GM12878 (cell line): ENCODE measurements at regions of chr5 and their contacts with region 1.

Region 1: DNA sequence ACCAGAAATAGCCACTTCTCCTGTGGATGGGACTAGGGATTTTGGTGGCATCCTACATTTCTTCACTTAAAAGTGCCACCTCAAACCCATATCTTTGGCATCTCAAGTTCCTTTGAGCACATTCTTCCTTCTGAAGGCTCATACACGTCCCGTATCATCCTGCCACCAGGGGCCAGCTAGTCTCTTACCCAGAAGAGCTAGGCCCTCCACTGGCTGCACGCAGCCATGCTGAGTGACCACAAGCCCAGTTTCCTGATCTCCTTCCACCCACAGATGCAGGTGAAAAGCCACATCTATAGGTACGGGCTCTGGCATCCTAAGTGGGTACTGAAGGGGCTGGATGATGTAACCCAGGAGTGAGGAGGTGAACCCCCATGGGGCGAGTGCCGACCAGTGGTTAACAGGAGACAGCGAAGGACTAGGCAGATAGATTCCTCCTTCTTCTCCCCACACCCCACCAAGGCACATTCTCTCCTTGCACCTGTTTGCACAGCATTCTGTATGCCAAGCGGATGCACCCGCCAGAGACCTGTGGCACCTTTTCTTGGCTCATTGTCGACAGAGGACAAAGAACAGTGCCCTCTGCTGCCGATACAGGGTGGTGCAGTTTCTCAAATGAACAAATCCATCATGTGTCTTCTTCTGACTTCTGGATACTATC is 14.4 kb upstream of the SCGB3A1 start:
- DNase-seq: peak; percentile 17
- ATAC-seq: peak; percentile 84
- H3K4me3 ChIP-seq: no peak overlapping the region
- H3K27ac ChIP-seq: no peak overlapping the region
- H3K4me1 ChIP-seq: no peaks in the 10 kb centered on the region
- H3K27me3 ChIP-seq: no peaks in the 10 kb centered on the region
- CTCF ChIP-seq: peak; percentile 79 to 86 (median 83)
- EP300 ChIP-seq: no peak
- POLR2A ChIP-seq: no peak
- RAD21 ChIP-seq: peak; percentile 61

Region 2: DNA sequence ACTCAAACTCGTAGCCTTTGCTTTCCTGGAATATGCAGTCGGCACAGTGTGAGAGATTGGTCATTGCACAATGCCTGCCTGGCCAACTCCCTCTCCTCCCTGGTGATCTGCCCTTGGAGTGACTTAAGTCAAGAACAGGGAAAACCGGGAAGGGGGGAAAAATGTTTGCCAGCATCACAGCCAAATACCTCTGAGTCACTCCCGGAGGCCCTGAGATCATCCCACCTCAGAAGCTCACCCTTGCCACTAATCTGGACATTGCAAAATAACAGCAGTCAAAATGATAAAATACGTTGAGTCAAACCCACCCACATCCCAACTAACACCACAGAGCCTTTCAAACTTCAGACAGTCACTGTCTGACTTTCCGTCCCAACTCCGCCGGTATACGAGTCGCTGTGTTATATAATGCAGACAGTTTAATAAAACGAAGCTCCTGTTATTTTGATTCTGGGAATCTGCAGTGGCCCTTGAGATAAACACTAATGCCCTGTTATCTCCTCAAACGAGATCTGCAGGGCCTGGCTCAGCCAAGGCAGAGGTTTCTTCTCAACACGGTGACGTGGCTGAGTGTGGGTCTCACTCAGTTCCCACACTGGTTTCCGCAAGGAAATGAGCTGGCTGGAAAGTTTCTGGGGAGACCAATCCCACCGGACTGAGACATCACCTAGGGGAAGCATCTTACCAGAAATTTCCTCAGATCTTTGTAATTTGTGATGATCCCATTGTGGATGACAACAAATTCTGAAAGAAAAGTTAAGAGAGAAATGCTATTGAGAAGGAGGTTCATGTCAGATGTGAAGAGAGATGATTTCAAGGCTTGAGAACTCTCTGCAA is 274.7 kb before region 1 on chr5:
- CTCF ChIA-PET with region 1: no interaction called
- POLR2A ChIA-PET with region 1: no interaction called
- RAD21 ChIA-PET with region 1: no interaction called
- SMC1A ChIA-PET with region 1: no interaction called
- in situ Hi-C with region 1: no loop called
- intact Hi-C with region 1: no loop called
- DNase-seq: no peak
- ATAC-seq: no peak
- H3K4me3 ChIP-seq: no peak overlapping the region
- H3K27ac ChIP-seq: no peak overlapping the region
- H3K4me1 ChIP-seq: no peaks in the 10 kb centered on the region
- H3K27me3 ChIP-seq: no peaks in the 10 kb centered on the region
- CTCF ChIP-seq: no peak
- EP300 ChIP-seq: no peak
- POLR2A ChIP-seq: no peak
- RAD21 ChIP-seq: no peak

Region 3: GRCh38 chr5:180380856-180381255 is 224.8 kb before region 1 on chr5:
- CTCF ChIA-PET with region 1: no interaction called
- POLR2A ChIA-PET with region 1: no interaction called
- RAD21 ChIA-PET with region 1: no interaction called
- SMC1A ChIA-PET with region 1: no interaction called
- in situ Hi-C with region 1: no loop called
- intact Hi-C with region 1: no loop called
- DNase-seq: no peak
- ATAC-seq: no peak
- H3K4me3 ChIP-seq: no peak overlapping the region
- H3K27ac ChIP-seq: no peak overlapping the region
- H3K4me1 ChIP-seq: no peaks in the 10 kb centered on the region
- H3K27me3 ChIP-seq: peaks cover 0 to 2% of the 10 kb centered on the region in 2 experiments
- CTCF ChIP-seq: no peak
- EP300 ChIP-seq: no peak
- POLR2A ChIP-seq: no peak
- RAD21 ChIP-seq: no peak

Region 4: GRCh38 chr5:180494060-180494509 is 111.6 kb before region 1 on chr5 and contains the start of gene CNOT6:
- CTCF ChIA-PET with region 1: interaction called, 4 read pairs
- POLR2A ChIA-PET with region 1: no interaction called
- RAD21 ChIA-PET with region 1: no interaction called
- SMC1A ChIA-PET with region 1: no interaction called
- in situ Hi-C with region 1: no loop called
- intact Hi-C with region 1: loop called (anchors 5 kb)
- DNase-seq: peak; percentile 65
- ATAC-seq: peak; percentile 97
- H3K4me3 ChIP-seq: peak within 1 kb of the TSS; percentile 68
- H3K27ac ChIP-seq: peak within 1 kb of the TSS; percentile 64
- H3K4me1 ChIP-seq: peaks cover 3% of the 10 kb centered on the region; the same call in 1 of the 2 replicates
- H3K27me3 ChIP-seq: no peaks in the 10 kb centered on the region
- CTCF ChIP-seq: no peak
- EP300 ChIP-seq: no peak
- POLR2A ChIP-seq: 0 out of 2 replicates have a peak, but pooled peaks have one; percentile 64
- RAD21 ChIP-seq: no peak
- polyA plus RNA-seq, gene CNOT6: 3.8 to 5.6 TPM